GM23248 (cell line): ENCODE measurements at regions of chr5 and their contacts with region 1.

Region 1: DNA sequence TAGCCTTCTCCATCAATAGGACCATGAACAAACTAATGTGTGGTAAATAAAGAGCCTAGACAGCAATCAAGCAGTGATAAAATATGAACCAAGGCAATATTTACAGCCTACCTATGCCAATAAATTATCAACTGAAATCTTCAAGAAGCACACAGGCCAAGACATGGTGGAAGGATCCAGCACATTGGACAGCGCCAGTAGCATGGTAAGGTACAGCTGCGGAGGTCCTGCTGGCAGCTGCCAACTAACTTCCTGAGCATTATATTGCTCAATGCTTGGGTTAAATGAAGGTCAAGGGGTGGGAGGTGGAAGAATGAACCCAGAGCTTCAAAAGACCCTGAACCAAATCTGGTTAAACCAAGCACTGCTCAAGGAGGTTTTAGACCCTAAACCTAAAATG is 16.5 kb upstream of the SPDL1 start:
- DNase-seq: peak; percentile 46
- H3K4me3 ChIP-seq: no peak overlapping the region
- H3K27ac ChIP-seq: no peak overlapping the region
- H3K4me1 ChIP-seq: no peaks in the 10 kb centered on the region
- H3K27me3 ChIP-seq: no peaks in the 10 kb centered on the region

Region 2: DNA sequence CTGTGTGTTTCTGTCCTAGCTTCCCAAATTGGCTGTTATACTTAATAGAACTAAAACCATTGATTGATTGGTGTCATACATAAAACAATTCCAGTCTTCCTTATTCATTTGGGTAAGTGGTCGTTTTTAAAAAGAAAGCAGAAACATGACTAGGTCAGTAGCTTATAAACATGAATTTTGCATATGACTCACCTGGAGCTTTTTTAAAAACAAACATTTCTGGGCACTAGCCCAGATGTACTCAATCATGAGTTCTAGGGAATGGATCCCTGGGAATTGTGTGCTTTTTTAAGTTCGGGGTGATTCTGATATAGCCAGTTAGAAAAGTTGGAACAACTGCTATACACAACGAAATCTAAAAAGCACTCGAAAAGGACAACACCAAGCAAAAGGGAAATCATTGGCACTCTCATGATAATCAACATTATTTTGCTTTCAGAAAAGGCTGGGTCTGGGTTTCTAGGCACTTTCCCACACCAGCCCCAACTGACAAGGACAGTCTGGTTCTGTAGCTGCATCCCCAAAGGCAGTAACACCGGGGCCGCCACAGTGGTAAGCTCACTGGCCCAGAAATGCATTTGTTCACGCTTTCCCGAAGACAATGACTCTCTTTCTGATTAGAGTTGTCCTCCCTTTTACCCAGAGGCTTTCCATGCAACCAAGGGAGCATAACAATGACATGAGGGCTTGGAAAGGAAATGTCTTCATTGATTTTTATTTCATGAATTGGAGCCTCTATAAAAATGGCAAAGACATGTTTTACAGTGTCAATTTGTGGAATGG is 1940.5 kb before region 1 on chr5:
- in situ Hi-C with region 1: no loop called
- DNase-seq: peak; percentile 32
- H3K4me3 ChIP-seq: no peak overlapping the region
- H3K27ac ChIP-seq: no peak overlapping the region
- H3K4me1 ChIP-seq: no peaks in the 10 kb centered on the region
- H3K27me3 ChIP-seq: no peaks in the 10 kb centered on the region

Region 3: DNA sequence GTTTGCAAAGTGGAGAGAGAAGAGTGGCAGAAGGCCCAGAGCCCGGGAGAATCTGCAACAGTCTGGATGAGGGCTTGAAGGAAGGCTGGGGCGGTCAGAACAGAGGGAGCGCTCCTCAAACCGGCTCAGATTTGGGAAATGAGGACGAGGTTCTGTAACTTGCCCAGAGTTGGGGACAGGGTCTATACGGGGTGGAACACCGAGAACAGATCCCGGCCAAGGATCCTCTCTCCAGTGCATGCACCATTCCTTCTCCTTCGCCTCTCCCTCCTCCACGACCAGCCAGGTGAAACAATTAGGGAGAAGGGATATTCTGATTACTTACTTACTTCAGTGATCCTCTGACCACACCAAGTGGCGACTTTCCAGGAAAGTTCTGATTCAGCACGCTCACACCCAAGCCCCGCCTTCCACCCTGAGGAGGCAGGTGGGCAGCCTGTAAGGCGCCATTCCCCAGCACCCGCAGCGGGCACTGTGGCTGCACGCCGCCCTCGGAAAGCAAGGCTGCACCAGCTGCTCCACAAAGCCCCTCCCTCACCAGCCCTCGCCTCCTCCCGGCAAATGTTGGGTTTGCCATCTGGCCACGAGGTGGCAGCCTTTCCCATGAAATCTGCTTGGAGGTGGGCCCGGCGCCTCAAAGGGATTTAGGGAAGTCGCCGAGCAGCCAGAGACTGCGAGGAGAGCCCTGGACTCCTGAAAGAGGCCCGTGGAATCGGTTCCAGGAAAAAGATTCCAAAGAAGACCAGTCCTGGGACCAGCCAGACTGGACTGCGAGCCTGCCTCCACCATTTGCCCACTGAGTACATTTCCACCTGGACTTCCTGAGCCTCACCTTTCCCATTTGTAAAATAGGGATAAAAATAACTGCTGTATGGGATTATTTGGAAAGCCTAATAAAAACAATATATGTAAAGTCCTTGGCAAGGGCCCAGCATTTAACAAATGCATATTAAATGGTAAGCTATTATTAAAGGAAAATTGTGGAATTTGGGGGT is 1297.8 kb before region 1 on chr5:
- in situ Hi-C with region 1: loop called (anchors 25 kb)
- DNase-seq: peak; percentile 91
- H3K4me3 ChIP-seq: peak overlapping the region; percentile 64
- H3K27ac ChIP-seq: no peak overlapping the region
- H3K4me1 ChIP-seq: peaks cover 6% of the 10 kb centered on the region; the same call in 1 of the 2 replicates
- H3K27me3 ChIP-seq: no peaks in the 10 kb centered on the region

Region 4: GRCh38 chr5:168698991-168699401 is 868.1 kb before region 1 on chr5:
- in situ Hi-C with region 1: loop called (anchors 10 kb)
- DNase-seq: peak; percentile 32
- H3K4me3 ChIP-seq: no peak overlapping the region
- H3K27ac ChIP-seq: no peak overlapping the region
- H3K4me1 ChIP-seq: peaks cover 7% of the 10 kb centered on the region; the same call in 1 of the 2 replicates
- H3K27me3 ChIP-seq: no peaks in the 10 kb centered on the region

Region 5: GRCh38 chr5:168987543-168988300 is 579.4 kb before region 1 on chr5:
- in situ Hi-C with region 1: loop called (anchors 10 kb)
- DNase-seq: peak; percentile 75
- H3K4me3 ChIP-seq: no peak overlapping the region
- H3K27ac ChIP-seq: no peak overlapping the region
- H3K4me1 ChIP-seq: peaks cover 12% of the 10 kb centered on the region
- H3K27me3 ChIP-seq: no peaks in the 10 kb centered on the region

Region 6: DNA sequence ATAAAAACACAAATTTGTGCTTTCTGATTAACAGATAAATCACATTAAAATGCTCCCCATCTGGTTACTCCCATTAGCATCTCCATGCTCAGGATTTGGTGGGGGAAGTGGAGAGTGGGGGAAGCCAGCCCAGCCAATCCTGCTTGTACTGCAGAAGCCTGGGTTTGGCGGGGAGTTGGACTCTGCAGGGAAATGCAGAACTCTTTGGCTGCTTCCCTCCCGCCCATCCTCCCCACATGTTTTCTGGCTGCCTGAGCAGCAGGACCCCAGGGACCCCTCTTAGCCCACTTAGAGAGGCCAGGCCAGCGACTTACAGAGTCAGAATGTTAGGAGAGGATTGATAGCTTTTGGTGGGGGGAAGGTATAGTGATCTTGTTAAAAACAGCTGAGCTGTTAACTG is 479.2 kb after region 1 on chr5:
- in situ Hi-C with region 1: no loop called
- DNase-seq: no peak
- H3K4me3 ChIP-seq: no peak overlapping the region
- H3K27ac ChIP-seq: no peak overlapping the region
- H3K4me1 ChIP-seq: no peaks in the 10 kb centered on the region
- H3K27me3 ChIP-seq: peaks cover 5% of the 10 kb centered on the region; the same call in 1 of the 2 replicates